PC-3 (cell line): ENCODE measurements at regions of chr5 and their contacts with region 1.

Region 1: DNA sequence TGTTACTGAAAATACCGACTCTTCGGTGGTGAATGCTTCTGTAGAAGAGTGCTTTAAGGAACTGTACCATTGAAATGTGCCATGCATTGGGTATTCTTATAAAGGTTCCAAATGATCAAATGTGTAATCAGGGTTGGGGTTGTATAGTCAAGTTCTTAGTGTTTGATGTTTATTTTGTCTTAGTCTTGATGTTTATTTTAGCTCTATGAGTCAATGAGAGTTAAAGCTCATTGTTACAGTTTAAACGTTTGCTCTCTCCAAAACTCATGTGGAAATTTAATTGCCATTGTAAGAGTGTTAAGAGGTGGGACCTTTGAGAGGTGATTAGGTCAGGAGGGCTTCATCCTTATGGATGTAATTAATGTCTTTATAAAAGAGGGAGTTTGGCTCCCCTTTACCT is 153.0 kb downstream of the FER start:
- DNase-seq: peak; percentile 70
- ATAC-seq: peak; percentile 96
- H3K4me3 ChIP-seq: no peak overlapping the region
- H3K27ac ChIP-seq: peak overlapping the region; percentile 27
- H3K4me1 ChIP-seq: peaks cover 16% of the 10 kb centered on the region
- H3K27me3 ChIP-seq: no peaks in the 10 kb centered on the region
- CTCF ChIP-seq: no peak

Region 2: GRCh38 chr5:108818613-108819272 is 81.9 kb before region 1 on chr5:
- CTCF ChIA-PET with region 1: no interaction called
- POLR2A ChIA-PET with region 1: no interaction called
- intact Hi-C with region 1: no loop called
- DNase-seq: peak; percentile 51
- ATAC-seq: peak; percentile 64; the same call in 1 of the 2 replicates
- H3K4me3 ChIP-seq: no peak overlapping the region
- H3K27ac ChIP-seq: no peak overlapping the region
- H3K4me1 ChIP-seq: no peaks in the 10 kb centered on the region
- H3K27me3 ChIP-seq: no peaks in the 10 kb centered on the region
- CTCF ChIP-seq: no peak

Region 3: GRCh38 chr5:109455598-109456096 is 555.0 kb after region 1 on chr5:
- CTCF ChIA-PET with region 1: no interaction called
- POLR2A ChIA-PET with region 1: no interaction called
- intact Hi-C with region 1: loop called (anchors 10 kb)
- DNase-seq: peak; percentile 83
- ATAC-seq: peak; percentile 98
- H3K4me3 ChIP-seq: no peak overlapping the region
- H3K27ac ChIP-seq: peak overlapping the region; percentile 36
- H3K4me1 ChIP-seq: peaks cover 9% of the 10 kb centered on the region
- H3K27me3 ChIP-seq: no peaks in the 10 kb centered on the region
- CTCF ChIP-seq: no peak

Region 4: DNA sequence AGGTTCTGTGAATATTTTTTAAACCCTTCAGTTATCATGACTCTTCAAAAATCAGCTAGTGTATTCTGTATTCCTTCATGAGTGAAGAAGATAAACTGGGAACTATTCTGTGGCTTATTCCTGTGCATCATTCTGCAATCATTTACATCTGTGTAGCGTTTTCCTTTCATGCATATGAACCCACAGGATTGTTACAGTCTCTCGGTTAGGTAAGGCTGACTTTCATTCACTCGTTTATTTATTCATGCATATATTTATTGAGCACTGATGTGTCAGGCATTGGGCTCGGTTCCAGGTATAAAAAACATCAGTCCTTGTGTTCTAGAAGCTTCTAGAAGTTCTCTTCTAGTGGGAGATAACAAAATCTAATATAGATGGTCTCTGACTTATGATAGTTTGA is 1107.5 kb after region 1 on chr5:
- CTCF ChIA-PET with region 1: no interaction called
- POLR2A ChIA-PET with region 1: no interaction called
- intact Hi-C with region 1: loop called (anchors 10 kb)
- DNase-seq: no peak
- ATAC-seq: peak; percentile 27; the same call in 1 of the 2 replicates
- H3K4me3 ChIP-seq: no peak overlapping the region
- H3K27ac ChIP-seq: no peak overlapping the region
- H3K4me1 ChIP-seq: no peaks in the 10 kb centered on the region
- H3K27me3 ChIP-seq: no peaks in the 10 kb centered on the region
- CTCF ChIP-seq: no peak